Right lobe of liver (tissue), 6 donors: ENCODE measurements at regions of chr21 and their contacts with region 1.

Region 1: DNA sequence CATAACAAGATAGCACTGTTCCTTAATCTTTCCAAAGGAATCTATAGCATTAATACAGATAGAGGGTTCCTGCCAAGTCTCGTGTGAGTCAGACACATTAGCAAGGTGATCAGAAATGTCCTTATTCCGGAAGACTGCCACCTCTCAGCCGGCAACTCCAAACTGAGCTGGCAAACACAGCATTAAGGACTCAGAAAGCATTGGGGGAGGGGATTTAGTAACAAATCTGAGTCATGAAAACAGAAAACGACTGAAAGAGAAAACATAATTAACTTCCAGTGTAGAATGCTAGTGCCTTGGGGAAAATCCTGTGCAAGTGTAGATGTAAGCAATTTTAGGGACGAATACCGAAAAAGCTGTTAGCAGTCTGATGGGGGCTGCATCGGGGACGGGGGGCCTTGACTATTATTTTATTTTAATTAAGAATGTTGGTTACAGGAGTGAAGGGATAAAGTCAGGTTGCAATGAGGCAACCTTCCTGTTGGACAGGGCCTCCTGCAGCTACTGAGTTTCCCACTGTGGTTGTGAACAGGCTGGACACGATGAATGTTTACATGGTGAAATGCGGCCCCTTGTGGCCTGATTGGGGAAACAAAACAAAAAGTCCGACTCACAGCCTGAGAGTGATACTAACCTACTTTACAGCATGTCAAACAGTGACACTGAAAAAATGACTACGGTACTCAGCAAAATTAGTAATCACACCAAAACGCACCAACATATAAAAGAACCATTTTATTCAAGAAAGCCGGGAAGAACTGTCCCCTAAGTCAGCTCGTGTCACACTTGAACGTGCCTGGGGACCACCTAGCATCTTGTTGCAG is 20.7 kb downstream of the MIS18A start:
- DNase-seq: peak; percentile 53 to 69 (median 61)
- ATAC-seq: peak; percentile 95 to 99 (median 96)
- H3K4me3 ChIP-seq: no peak overlapping the region
- H3K27ac ChIP-seq: no peak overlapping the region
- H3K4me1 ChIP-seq: no peaks in the 10 kb centered on the region
- H3K27me3 ChIP-seq: no peaks in the 10 kb centered on the region
- CTCF ChIP-seq: peak; percentile 68 to 85 (median 74)
- POLR2A ChIP-seq: no peak

Region 2: GRCh38 chr21:31781737-31782136 is 476.4 kb before region 1 on chr21:
- intact Hi-C with region 1: loop called (anchors 5 to 10 kb)
- DNase-seq: no peak
- ATAC-seq: peak in 2 of 4 donors; percentile 19 to 35
- H3K4me3 ChIP-seq: no peak overlapping the region
- H3K27ac ChIP-seq: no peak overlapping the region
- H3K4me1 ChIP-seq: no peaks in the 10 kb centered on the region
- H3K27me3 ChIP-seq: no peaks in the 10 kb centered on the region
- CTCF ChIP-seq: no peak
- POLR2A ChIP-seq: no peak

Region 3: GRCh38 chr21:32173121-32173724 is 85.0 kb before region 1 on chr21:
- intact Hi-C with region 1: no loop called
- DNase-seq: no peak
- ATAC-seq: no peak
- H3K4me3 ChIP-seq: no peak overlapping the region
- H3K27ac ChIP-seq: no peak overlapping the region
- H3K4me1 ChIP-seq: no peaks in the 10 kb centered on the region
- H3K27me3 ChIP-seq: no peaks in the 10 kb centered on the region
- CTCF ChIP-seq: no peak
- POLR2A ChIP-seq: no peak